ENCODE measurements at regions of chr2 and their contacts with region 1.

Region 1: DNA sequence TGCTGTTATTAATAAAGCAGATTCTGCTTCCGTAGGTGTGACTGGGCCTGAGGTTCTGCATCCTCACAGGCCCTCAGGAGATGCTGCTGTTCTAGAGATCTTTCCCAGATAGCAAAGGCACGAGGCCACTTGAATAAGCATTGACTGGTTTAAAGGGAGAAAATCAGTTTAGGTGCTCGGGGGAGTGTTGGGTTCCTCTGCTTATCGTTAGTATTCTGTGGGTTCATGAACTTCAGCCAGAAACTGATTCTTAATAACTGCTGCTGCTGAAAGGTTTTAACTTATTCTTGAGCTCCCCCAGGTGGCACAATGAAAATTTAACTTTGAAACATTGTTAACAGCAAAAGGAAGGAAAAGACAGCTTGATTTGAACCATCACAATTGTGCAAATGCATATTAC is 56.9 kb downstream of the ITGA6 start:
- DNase-seq: peak in 3 of 35 experiments; percentile 33 to 61 (median 39)
- ATAC-seq: peak; percentile 59 to 70 (median 64)
- H3K4me3 ChIP-seq: no peak overlapping the region
- H3K4me3 Mint-ChIP-seq: peak overlapping the region in 1 of 3 donors; percentile 58
- H3K27ac ChIP-seq: no peak overlapping the region
- H3K27ac Mint-ChIP-seq: peak overlapping the region; percentile 82 to 85
- H3K4me1 ChIP-seq: peaks cover 26 to 41% of the 10 kb centered on the region in 2 experiments
- H3K4me1 Mint-ChIP-seq: peaks cover 61 to 72% (median 64%) of the 10 kb centered on the region in 3 donors
- H3K27me3 ChIP-seq: no peaks in the 10 kb centered on the region
- H3K27me3 Mint-ChIP-seq: no peaks in the 10 kb centered on the region

Region 2: DNA sequence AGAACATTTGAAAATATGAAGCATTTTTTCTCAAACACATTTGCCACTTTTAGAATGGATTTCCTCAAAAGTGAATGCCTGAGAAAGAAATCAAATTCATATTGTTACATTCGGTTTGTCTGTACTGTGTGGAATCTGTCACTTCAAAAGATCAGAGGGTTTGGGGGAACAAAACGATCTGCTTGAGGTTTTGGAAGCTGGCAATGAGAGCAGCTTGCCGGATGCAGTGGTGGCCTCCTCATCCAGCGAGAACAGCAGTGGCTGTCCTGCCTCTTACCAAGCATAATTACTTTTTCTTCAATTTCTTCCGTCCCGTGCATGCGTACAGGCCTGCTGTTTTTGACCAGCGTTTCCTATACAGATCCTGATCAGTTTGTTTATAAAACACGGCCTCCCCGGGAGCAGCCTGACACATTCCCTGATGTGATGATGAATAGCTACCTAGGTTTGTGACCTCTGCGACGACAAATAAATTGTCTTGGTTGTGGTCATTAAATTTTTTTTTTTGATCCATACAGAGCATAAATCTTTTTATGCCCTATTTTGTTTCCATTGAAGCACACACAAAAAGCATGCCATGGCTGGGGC is 11.7 kb before region 1 on chr2:
- CTCF ChIA-PET with region 1: interaction called, 9 to 11 read pairs
- POLR2A ChIA-PET with region 1: interaction called, 3 to 4 read pairs
- DNase-seq: peak in 16 of 35 experiments; percentile 14 to 55 (median 31)
- ATAC-seq: peak; percentile 86 to 98 (median 92)
- H3K4me3 ChIP-seq: no peak overlapping the region
- H3K4me3 Mint-ChIP-seq: peak overlapping the region in 2 of 3 donors; percentile 17 to 46
- H3K27ac ChIP-seq: no peak overlapping the region
- H3K27ac Mint-ChIP-seq: peak overlapping the region; percentile 68 to 86
- H3K4me1 ChIP-seq: peaks cover 17 to 26% of the 10 kb centered on the region in 2 experiments
- H3K4me1 Mint-ChIP-seq: peaks cover 43 to 56% (median 46%) of the 10 kb centered on the region in 3 donors
- H3K27me3 ChIP-seq: no peaks in the 10 kb centered on the region
- H3K27me3 Mint-ChIP-seq: no peaks in the 10 kb centered on the region